Gastrocnemius medialis (tissue), 4 donors: ENCODE measurements at regions of chr9 and their contacts with region 1.

Region 1: DNA sequence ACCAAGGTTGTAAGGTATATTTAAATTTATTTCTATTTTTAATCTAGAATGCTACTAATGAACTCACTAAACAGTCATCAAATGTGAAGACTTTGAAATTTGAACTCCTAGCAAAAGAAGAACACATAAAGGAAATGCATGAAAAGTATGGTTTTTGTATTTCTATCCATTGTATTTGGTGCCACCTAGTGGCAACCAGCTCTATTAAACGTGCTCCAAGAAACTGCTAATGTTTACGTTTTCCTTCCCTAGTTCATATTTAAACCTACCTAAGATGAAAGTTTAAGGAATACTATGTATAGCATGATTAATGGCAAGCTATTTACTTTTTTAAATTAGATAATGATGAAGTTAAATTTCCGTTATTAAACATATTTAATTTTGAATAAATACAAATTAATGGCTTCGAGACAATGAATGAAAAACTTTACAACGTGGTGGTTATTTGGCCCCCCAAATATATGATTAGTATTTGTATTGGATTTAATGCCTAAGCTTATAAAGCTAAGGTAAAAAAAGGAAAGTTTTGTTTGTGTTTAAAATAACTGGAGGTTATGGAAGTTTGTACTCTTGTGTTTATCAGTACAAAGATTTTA is 115.9 kb upstream of the SH3GL2 start:
- DNase-seq: no peak
- ATAC-seq: no peak
- H3K4me3 ChIP-seq: no peak overlapping the region
- H3K27ac ChIP-seq: no peak overlapping the region
- H3K4me1 ChIP-seq: no peaks in the 10 kb centered on the region
- H3K27me3 ChIP-seq: no peaks in the 10 kb centered on the region
- CTCF ChIP-seq: peak; percentile 40 to 73 (median 59)
- POLR2A ChIP-seq: no peak

Region 2: GRCh38 chr9:15873569-15874177 is 1589.3 kb before region 1 on chr9:
- in situ Hi-C with region 1: loop called in 1 of 4 experiments (anchors 25 kb)
- intact Hi-C with region 1: loop called (anchors 5 kb)
- DNase-seq: no peak
- ATAC-seq: no peak
- H3K4me3 ChIP-seq: no peak overlapping the region
- H3K27ac ChIP-seq: no peak overlapping the region
- H3K4me1 ChIP-seq: no peaks in the 10 kb centered on the region
- H3K27me3 ChIP-seq: no peaks in the 10 kb centered on the region
- CTCF ChIP-seq: peak; percentile 23 to 59 (median 41)
- POLR2A ChIP-seq: no peak

Region 3: DNA sequence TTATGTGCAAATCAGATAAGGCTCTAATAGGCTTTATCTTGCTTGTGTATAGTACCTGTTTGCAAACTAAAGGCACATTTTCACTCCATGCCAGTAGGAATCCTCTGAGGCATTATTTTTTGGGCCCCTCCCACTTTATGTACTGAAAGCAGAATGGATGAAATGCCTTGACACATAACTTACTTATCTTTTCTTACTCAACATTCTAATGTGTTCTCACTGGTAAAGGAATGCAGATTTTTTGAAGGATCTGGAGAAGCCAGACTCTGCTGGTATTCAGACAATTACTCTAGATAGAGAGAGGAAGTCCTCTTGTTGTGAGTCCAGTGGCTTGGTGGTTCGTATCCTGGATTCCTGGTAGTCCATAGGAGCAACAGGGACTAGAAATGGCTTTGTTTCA is 1573.4 kb before region 1 on chr9:
- in situ Hi-C with region 1: loop called in 1 of 4 experiments (anchors 25 kb)
- intact Hi-C with region 1: no loop called
- DNase-seq: no peak
- ATAC-seq: no peak
- H3K4me3 ChIP-seq: no peak overlapping the region
- H3K27ac ChIP-seq: no peak overlapping the region
- H3K4me1 ChIP-seq: no peaks in the 10 kb centered on the region
- H3K27me3 ChIP-seq: no peaks in the 10 kb centered on the region
- CTCF ChIP-seq: no peak
- POLR2A ChIP-seq: no peak

Region 4: GRCh38 chr9:16191691-16192402 is 1271.1 kb before region 1 on chr9:
- in situ Hi-C with region 1: no loop called
- intact Hi-C with region 1: loop called (anchors 10 kb)
- DNase-seq: peak; percentile 28 to 55
- ATAC-seq: peak; percentile 66 to 68
- H3K4me3 ChIP-seq: no peak overlapping the region
- H3K27ac ChIP-seq: no peak overlapping the region
- H3K4me1 ChIP-seq: peaks cover 3% of the 10 kb centered on the region in 2 donors
- H3K27me3 ChIP-seq: no peaks in the 10 kb centered on the region
- CTCF ChIP-seq: peak; percentile 16 to 78 (median 70)
- POLR2A ChIP-seq: no peak

Region 5: GRCh38 chr9:17063535-17064135 is 399.3 kb before region 1 on chr9:
- in situ Hi-C with region 1: no loop called
- intact Hi-C with region 1: loop called (anchors 5 kb)
- DNase-seq: no peak
- ATAC-seq: peak in 1 of 2 donors; percentile 71
- H3K4me3 ChIP-seq: no peak overlapping the region
- H3K27ac ChIP-seq: no peak overlapping the region
- H3K4me1 ChIP-seq: no peaks in the 10 kb centered on the region
- H3K27me3 ChIP-seq: no peaks in the 10 kb centered on the region
- CTCF ChIP-seq: peak; percentile 23 to 68 (median 41)
- POLR2A ChIP-seq: no peak

Region 6: DNA sequence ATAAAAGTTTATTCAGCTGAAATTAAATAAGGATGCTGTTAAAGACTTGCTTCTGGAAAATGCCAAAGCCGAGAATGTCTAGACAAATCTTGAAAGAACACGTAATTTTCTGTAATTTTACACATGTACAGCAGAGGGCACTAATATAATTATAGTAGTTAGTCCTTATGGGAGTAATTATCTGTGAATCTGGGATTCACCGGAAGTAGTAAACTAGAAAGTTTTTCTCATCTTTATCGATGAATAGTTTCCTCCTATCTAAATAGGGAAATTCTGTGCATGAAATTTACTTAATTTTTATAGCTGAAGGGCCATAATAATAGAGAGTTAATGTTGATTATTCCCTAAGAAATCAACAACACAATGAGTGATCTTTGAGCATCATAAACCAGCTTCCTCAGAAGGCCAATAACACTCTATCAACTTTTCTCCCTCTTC is 346.5 kb before region 1 on chr9:
- in situ Hi-C with region 1: loop called in 3 of 4 experiments (anchors 5 to 25 kb)
- intact Hi-C with region 1: loop called (anchors 2 kb)
- DNase-seq: no peak
- ATAC-seq: no peak
- H3K4me3 ChIP-seq: no peak overlapping the region
- H3K27ac ChIP-seq: no peak overlapping the region
- H3K4me1 ChIP-seq: no peaks in the 10 kb centered on the region
- H3K27me3 ChIP-seq: no peaks in the 10 kb centered on the region
- CTCF ChIP-seq: peak in 2 of 5 experiments; percentile 35 to 50
- POLR2A ChIP-seq: no peak

Region 7: DNA sequence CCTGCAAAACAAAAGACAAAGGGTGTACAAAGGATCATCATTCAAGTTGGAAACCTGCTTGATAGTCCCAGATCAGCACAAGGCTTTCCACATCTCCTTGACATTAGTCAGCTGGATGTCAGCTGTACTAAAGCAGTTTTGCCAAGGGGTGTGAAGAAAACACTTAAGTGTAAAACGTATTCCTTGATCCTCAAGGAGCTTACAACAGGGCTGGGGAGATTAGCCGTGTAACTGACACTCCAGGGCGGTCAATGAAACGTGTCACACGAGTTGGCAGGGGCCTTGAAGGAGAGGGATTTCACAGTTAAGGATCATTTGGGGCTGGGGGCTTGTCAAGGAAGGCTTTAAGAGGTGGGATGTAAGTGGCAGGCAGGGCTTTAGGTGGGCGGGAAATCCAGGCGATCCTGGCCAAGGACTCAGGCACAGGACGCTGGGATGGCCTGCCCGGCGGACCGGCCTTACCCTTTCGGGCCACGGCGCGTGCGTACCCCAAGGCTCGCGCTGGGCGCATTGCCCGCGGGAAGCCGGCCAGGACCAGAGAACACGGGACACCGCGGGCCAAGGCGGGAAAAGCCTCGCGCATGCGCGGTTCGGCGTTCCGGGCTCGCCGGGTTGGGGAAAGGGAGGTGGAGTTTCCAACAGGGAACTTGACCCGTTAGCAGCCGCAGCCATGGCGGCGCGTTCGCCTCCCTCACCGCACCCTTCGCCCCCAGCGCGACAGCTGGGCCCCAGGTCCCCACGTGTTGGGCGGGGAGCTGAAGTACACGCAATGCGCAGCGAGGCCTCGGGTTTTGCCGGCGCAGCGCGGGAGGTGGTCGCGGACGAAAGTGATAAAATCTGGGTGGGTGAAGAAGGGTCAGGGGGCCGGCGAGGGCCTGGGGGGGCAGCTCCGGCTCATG is 328.3 kb before region 1 on chr9 and contains the start of gene CNTLN:
- in situ Hi-C with region 1: no loop called
- intact Hi-C with region 1: no loop called
- DNase-seq: peak; percentile 71 to 80
- ATAC-seq: peak; percentile 88 to 92
- H3K4me3 ChIP-seq: peak within 1 kb of the TSS; percentile 70 to 93 (median 83)
- H3K27ac ChIP-seq: peak within 1 kb of the TSS; percentile 78 to 85 (median 82)
- H3K4me1 ChIP-seq: peaks cover 5 to 10% of the 10 kb centered on the region in 2 donors
- H3K27me3 ChIP-seq: no peaks in the 10 kb centered on the region
- CTCF ChIP-seq: peak in 1 of 5 experiments; percentile 8
- POLR2A ChIP-seq: peak; percentile 48 to 58
- total RNA-seq, gene CNTLN: 1.3 to 6.6 (median 2.4) TPM

Region 8: GRCh38 chr9:17236147-17236546 is 226.8 kb before region 1 on chr9:
- in situ Hi-C with region 1: no loop called
- intact Hi-C with region 1: no loop called
- DNase-seq: no peak
- ATAC-seq: no peak
- H3K4me3 ChIP-seq: no peak overlapping the region
- H3K27ac ChIP-seq: no peak overlapping the region
- H3K4me1 ChIP-seq: no peaks in the 10 kb centered on the region
- H3K27me3 ChIP-seq: no peaks in the 10 kb centered on the region
- CTCF ChIP-seq: no peak
- POLR2A ChIP-seq: no peak

Region 9: DNA sequence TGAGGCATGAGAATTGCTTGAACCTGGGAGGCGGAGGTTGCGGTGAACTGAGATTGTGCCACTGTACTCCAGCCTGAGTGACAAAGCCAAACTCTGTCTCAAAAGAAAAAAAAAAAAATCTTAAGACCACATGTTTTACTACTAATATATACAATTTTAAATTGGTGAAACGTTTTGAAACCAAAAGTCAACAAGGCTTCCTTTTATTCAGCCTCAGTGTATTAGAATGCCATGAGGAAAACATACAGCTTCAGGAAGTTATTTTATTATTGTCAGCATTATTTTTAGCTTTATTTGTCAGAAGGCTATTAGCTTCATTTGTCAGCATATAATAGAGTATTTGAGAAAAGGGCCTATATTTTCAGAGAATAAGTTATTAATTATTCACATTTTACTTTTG is 48.0 kb before region 1 on chr9:
- in situ Hi-C with region 1: no loop called
- intact Hi-C with region 1: no loop called
- DNase-seq: no peak
- ATAC-seq: no peak
- H3K4me3 ChIP-seq: no peak overlapping the region
- H3K27ac ChIP-seq: no peak overlapping the region
- H3K4me1 ChIP-seq: no peaks in the 10 kb centered on the region
- H3K27me3 ChIP-seq: no peaks in the 10 kb centered on the region
- CTCF ChIP-seq: no peak
- POLR2A ChIP-seq: no peak

Region 10: GRCh38 chr9:17503184-17503583 is 40.2 kb after region 1 on chr9:
- in situ Hi-C with region 1: no loop called
- intact Hi-C with region 1: no loop called
- DNase-seq: no peak
- ATAC-seq: no peak
- H3K4me3 ChIP-seq: no peak overlapping the region
- H3K27ac ChIP-seq: no peak overlapping the region
- H3K4me1 ChIP-seq: no peaks in the 10 kb centered on the region
- H3K27me3 ChIP-seq: no peaks in the 10 kb centered on the region
- CTCF ChIP-seq: no peak
- POLR2A ChIP-seq: no peak